Mucosa of descending colon (tissue), 3 donors: ENCODE measurements at regions of chr5 and their contacts with region 1.

Region 1: DNA sequence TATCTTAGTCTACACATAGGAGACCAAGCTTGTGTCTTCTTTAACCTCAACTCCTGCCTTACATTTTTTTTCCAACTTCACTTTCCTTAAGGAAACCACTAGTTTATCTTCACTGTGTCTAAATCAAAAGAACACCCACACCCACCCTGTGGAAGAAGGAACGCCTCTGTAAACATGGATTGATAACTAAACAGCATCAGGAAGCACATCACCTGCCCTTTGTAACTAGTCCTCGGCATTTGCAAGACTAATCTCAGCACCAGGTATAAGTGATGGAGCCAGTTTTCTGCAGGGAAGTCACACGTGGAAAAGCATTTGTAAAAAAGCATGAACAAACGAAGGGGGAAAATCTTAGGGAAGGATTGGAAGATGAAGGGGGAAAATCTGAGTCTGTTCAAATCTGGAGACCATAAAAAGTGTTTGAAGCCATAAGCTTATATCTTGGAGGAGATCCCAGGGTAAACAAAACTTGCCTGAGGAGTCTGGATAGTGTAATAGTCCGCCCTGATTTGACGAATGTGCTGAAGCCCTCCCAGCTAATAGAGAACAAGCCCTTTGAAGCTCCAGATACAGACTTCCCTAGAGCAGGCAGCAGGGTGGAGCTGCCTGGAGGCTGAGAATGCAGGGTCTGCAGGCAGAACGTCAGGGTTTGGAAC is 117.3 kb upstream of the LHFPL2 start:
- DNase-seq: no peak
- ATAC-seq: peak; percentile 42
- H3K4me3 ChIP-seq: no peak overlapping the region
- H3K4me1 ChIP-seq: no peaks in the 10 kb centered on the region
- CTCF ChIP-seq: no peak

Region 2: GRCh38 chr5:78649861-78650496 is 115.9 kb before region 1 on chr5:
- intact Hi-C with region 1: loop called in 1 of 2 experiments (anchors 5 kb)
- DNase-seq: no peak
- ATAC-seq: no peak
- H3K4me3 ChIP-seq: no peak overlapping the region
- H3K4me1 ChIP-seq: peaks cover 13% of the 10 kb centered on the region
- CTCF ChIP-seq: no peak